ENCODE measurements at regions of chr3 and their contacts with region 1.

Region 1: DNA sequence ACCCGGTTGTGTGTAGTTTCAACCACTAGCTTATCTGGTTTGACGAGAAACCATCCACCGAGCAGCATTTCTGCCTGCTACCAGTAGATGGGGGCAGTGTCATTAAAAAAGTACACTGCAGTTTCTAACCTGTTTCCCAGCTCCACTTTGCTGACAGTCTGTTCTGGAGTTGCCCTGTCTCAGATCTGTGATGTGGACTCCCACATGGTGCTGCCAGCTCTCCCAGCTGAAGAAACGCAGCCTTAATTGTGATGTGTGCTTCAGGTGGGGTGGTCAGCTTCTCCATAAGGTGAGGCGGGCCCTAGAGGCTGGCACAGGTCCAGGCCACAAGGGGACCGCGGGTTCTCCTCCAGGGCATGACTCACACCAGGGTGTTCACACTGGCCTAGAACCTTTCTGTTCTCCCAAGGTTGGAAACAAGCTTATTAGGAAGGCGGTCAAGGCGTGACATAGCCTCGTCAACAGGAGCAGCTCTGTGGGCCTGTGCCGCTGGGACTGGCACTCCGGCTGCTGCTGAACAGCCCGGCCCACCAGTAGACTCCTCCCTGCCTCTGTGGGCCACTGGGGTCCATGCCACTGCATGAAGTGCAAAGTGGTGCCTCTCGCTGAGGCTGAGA is 2.9 kb upstream of the FAM43A start:
- DNase-seq: peak; percentile 40 to 83
- ATAC-seq: peak; percentile 19 to 74 (median 62)
- H3K4me3 ChIP-seq: no peak overlapping the region
- H3K27ac ChIP-seq: peak overlapping the region in 6 of 10 donors; percentile 12 to 54 (median 41)
- H3K4me1 ChIP-seq: peaks cover 10 to 39% (median 29%) of the 10 kb centered on the region in 9 donors
- H3K27me3 ChIP-seq: no peaks in the 10 kb centered on the region
- CTCF ChIP-seq: peak; percentile 67 to 96 (median 91)

Region 2: GRCh38 chr3:194696475-194697091 is 13.8 kb after region 1 on chr3:
- intact Hi-C with region 1: no loop called
- DNase-seq: no peak
- ATAC-seq: no peak
- H3K4me3 ChIP-seq: no peak overlapping the region
- H3K27ac ChIP-seq: no peak overlapping the region
- H3K4me1 ChIP-seq: peaks cover 0 to 17% (median 0%) of the 10 kb centered on the region in 9 donors
- H3K27me3 ChIP-seq: no peaks in the 10 kb centered on the region
- CTCF ChIP-seq: no peak

Region 3: GRCh38 chr3:194769020-194769643 is 86.3 kb after region 1 on chr3:
- intact Hi-C with region 1: loop called in 3 of 10 experiments (anchors 2 to 5 kb)
- DNase-seq: peak; percentile 86 to 96
- ATAC-seq: peak; percentile 98 to 99 (median 98)
- H3K4me3 ChIP-seq: peak overlapping the region; percentile 6 to 55 (median 46)
- H3K27ac ChIP-seq: peak overlapping the region in 9 of 10 donors; percentile 11 to 82 (median 60)
- H3K4me1 ChIP-seq: peaks cover 6 to 42% (median 22%) of the 10 kb centered on the region in 9 donors
- H3K27me3 ChIP-seq: no peaks in the 10 kb centered on the region
- CTCF ChIP-seq: no peak

Region 4: DNA sequence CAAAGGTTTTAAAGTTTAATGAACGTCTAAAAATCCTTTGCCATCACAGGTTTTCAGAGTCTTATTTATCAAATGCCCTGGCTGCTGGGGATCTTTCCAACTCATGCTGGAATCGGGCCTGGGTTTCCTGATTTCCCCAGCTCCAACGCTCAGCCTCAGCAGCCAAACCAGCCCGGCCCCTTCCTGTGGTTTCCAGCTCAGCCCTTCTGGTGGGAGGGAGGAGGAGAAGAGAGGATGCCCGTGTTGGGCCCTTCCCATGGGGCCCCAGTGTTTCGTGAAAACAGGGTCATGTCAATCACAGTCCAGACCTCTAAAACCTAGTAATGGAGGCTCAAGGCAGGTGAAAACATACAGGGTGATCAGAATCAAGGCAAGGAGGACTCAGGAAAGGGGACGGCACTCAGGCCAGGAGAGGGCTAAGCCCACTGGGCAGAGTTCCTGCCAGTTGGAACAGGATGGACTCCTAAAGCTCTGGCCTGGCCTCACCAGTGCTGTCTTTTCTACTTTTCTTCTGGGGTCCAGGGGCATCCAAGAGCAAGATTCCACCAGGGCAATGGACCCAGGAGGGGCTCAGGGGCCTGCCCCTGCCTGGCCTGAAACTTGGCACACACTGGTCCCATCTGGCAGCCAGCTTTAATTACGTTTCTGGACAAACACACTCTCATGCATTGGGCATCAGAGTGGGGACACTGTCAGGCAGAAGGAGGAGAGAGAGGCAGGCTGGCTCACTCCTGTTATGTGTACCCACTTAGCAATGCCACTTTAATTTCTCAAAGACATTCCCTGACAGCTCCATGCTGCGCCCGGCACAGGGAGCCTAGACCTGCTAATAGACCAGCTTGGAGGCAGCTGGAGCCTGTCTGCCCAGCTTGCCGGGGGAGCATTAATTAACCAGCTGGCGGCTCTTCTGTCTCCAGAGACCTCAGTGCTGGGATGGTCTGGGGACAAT is 197.5 kb after region 1 on chr3:
- intact Hi-C with region 1: loop called in 3 of 10 experiments (anchors 5 to 10 kb)
- DNase-seq: peak; percentile 75 to 84
- ATAC-seq: peak; percentile 64 to 86 (median 76)
- H3K4me3 ChIP-seq: no peak overlapping the region
- H3K27ac ChIP-seq: peak overlapping the region; percentile 32 to 91 (median 81)
- H3K4me1 ChIP-seq: peaks cover 29 to 87% (median 64%) of the 10 kb centered on the region in 9 donors
- H3K27me3 ChIP-seq: no peaks in the 10 kb centered on the region
- CTCF ChIP-seq: no peak

Region 5: DNA sequence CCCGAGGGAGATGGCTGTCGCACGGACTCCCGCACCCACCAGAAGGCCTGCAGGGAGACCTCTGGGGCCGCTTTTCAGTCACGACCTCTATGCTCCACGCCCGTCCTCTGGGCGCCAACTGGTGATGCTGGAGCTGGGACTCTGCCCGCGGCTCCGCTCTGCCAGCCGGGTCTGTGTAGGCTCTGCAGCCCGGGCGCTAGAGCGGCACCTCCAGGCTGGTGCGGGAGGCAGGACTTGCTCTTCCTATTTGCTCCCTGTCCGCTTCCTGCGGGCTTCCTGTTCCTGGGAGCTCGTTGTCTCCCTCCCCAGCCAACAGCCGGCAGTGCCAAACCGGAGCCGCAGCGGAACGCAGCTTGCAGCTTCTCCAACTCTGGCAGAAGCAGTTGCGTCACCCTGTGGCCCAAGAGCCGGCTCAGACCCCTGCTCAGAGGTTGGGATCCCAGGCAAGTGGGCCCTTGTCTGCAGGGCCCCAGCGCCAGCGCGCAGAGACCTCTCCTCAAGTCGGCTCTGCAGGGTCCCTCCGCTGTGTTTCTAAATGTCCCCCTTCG is 302.3 kb after region 1 on chr3:
- intact Hi-C with region 1: loop called in 7 of 10 experiments (anchors 2 to 10 kb)
- DNase-seq: peak; percentile 78 to 85
- ATAC-seq: peak; percentile 90 to 96 (median 94)
- H3K4me3 ChIP-seq: peak overlapping the region in 9 of 10 donors; percentile 6 to 50 (median 37)
- H3K27ac ChIP-seq: peak overlapping the region in 7 of 10 donors; percentile 21 to 65 (median 46)
- H3K4me1 ChIP-seq: peaks cover 0 to 26% (median 13%) of the 10 kb centered on the region in 9 donors
- H3K27me3 ChIP-seq: no peaks in the 10 kb centered on the region
- CTCF ChIP-seq: peak; percentile 15 to 65 (median 49)

Region 6: DNA sequence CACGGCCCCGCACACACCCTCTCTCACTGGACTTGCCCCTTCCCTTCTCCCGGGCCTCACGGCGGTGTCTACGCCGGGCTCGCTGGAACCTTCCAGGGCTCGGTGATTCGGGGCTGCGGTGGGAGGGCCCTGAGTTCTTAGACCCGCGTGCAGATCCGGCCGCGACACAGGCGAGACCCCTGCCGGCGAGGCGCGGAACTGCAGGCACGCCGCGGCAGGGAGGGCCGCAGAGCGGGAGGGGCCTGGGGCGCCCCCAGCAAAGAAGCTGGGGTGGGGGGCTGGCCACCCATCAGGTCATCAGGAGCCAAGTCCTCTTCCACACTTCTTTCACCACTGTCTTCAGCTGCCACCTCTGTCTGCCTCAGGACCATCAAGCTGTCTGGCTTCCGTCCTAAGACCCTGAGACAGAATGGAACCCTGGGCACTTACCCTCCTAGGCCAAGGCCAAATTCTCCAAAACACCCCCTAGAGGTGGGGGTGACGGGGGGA is 423.7 kb after region 1 on chr3:
- intact Hi-C with region 1: loop called (anchors 1 to 5 kb)
- DNase-seq: peak; percentile 66 to 80
- ATAC-seq: peak; percentile 65 to 86 (median 80)
- H3K4me3 ChIP-seq: peak overlapping the region in 7 of 10 donors; percentile 2 to 44 (median 32)
- H3K27ac ChIP-seq: peak overlapping the region in 2 of 10 donors; percentile 10 to 44
- H3K4me1 ChIP-seq: peaks cover 7 to 41% (median 19%) of the 10 kb centered on the region in 9 donors
- H3K27me3 ChIP-seq: no peaks in the 10 kb centered on the region
- CTCF ChIP-seq: peak; percentile 99 to 100 (median 100)

Region 7: DNA sequence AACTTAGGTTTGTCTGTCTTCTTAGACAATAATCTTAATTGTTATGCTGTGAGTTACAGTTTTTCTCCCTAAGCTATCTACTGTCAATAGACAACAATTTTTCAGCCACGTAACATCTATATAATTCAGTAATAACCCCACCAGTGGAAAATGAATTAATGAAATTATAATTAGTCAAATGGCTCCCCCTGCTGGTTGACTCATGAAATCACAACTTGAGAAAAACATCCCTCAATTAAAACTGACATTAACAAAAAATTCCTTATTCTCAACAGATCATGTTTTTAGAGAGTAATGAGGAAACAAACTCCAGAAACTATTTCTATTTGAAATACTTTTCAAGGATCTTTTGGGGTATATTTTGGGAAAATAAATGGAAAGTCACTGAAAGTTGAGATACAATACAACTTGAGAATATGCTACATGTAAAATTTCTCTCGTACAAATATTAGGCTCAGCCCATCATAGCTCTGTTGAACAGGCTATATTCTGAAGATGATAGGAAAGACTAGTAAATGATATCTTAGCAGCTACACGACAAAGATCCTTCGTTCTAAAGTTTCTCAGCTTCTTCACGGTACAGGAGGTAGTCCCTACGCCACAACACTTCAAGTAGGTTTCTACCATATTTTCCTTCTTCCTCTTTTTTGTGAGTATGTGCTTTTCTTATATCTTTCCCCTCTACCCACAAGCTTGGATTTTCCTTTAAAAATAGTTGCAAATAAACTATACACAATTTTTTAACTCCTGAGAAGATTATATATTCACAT is 839.6 kb after region 1 on chr3:
- intact Hi-C with region 1: loop called in 6 of 10 experiments (anchors 5 to 10 kb)
- DNase-seq: no peak
- ATAC-seq: no peak
- H3K4me3 ChIP-seq: no peak overlapping the region
- H3K27ac ChIP-seq: no peak overlapping the region
- H3K4me1 ChIP-seq: peaks cover 0 to 15% (median 5%) of the 10 kb centered on the region in 9 donors
- H3K27me3 ChIP-seq: no peaks in the 10 kb centered on the region
- CTCF ChIP-seq: peak; percentile 63 to 87 (median 78)